Mammary epithelial cell (primary cell): ENCODE measurements at regions of chr1 and their contacts with region 1.

Region 1: DNA sequence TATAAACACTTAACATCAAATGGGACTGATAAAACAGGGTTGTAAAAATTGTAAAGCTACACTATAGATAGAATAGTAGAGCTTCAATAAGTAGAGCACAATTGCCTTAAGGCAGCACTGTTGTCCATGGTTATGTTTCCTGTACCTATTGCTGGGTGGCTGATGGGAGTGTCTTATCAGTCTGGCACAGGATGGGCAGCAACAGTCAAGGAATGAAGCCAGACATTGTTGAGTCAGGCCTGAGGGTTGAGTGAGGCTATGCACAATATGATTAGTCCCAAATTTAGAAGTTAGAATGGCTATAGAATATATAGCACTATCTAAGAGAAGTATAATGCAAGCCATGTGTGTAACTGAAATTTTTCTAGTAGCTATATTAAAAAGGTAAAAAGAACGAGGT is 25.0 kb upstream of the CD1D start:
- DNase-seq: peak; percentile 68
- H3K4me3 ChIP-seq: no peak overlapping the region
- H3K27ac ChIP-seq: no peak overlapping the region
- H3K4me1 ChIP-seq: peaks cover 36% of the 10 kb centered on the region
- H3K27me3 ChIP-seq: no peaks in the 10 kb centered on the region
- CTCF ChIP-seq: no peak

Region 2: DNA sequence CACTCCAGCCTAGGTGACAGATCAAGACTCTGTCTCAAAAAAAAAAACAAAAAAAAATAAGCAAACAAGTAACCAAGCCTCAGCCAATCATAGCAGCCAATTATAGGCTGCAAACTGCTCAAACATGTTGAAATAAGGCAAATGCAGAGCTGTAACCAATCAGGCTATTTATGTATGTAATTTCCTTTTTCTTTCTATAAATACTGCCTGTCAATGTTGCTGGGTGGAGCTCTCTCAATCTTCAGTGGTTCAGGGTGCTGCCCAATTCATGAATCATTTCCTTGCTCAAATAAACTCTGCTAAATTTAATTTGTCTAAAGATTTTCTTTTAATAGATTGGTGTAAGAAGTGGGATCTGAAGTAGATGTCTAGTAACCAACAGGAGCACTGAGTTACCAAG is 13.4 kb after region 1 on chr1:
- CTCF ChIA-PET with region 1: no interaction called
- dilution Hi-C with region 1: no loop called
- in situ Hi-C with region 1: no loop called
- intact Hi-C with region 1: loop called (anchors 2 kb)
- DNase-seq: peak; percentile 14
- H3K4me3 ChIP-seq: no peak overlapping the region
- H3K27ac ChIP-seq: no peak overlapping the region
- H3K4me1 ChIP-seq: no peaks in the 10 kb centered on the region
- H3K27me3 ChIP-seq: no peaks in the 10 kb centered on the region
- CTCF ChIP-seq: no peak

Region 3: GRCh38 chr1:158177700-158178450 is 22.2 kb after region 1 on chr1:
- CTCF ChIA-PET with region 1: no interaction called
- dilution Hi-C with region 1: no loop called
- in situ Hi-C with region 1: no loop called
- intact Hi-C with region 1: loop called (anchors 2 kb)
- DNase-seq: peak; percentile 81
- H3K4me3 ChIP-seq: peak overlapping the region; percentile 49 to 52 (median 49)
- H3K27ac ChIP-seq: peak overlapping the region; percentile 33
- H3K4me1 ChIP-seq: peaks cover 18% of the 10 kb centered on the region
- H3K27me3 ChIP-seq: no peaks in the 10 kb centered on the region
- CTCF ChIP-seq: no peak